ENCODE measurements at regions of chr10 and their contacts with region 1.

Region 1: DNA sequence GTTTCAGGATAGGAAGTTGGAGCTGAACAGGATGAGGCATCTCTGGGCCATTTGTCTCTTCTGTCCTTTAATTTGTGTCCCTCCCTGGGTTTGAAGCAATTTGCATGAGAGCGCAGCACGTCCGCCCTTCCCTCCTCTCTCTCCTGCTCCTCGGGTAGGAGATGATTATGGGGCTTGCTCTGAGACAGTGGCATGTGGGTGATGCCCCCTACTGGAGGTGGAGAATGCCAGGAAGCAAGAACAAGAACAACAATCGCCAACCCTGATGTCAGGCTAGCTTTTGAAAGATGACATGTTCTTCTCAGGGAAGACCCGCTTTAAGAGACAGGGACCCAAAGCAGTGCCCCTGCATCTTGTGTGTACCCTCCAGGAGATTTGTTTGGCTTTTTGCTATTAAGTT is 63.9 kb upstream of the LOXL4 start:
- DNase-seq: peak; percentile 46 to 59
- H3K4me3 ChIP-seq: no peak overlapping the region
- H3K27ac ChIP-seq: no peak overlapping the region
- H3K4me1 ChIP-seq: no peaks in the 10 kb centered on the region
- H3K27me3 ChIP-seq: no peaks in the 10 kb centered on the region
- CTCF ChIP-seq: peak; percentile 73 to 88 (median 80)
- EP300 ChIP-seq: no peak
- POLR2A ChIP-seq: no peak
- RAD21 ChIP-seq: peak; percentile 72 to 79

Region 2: GRCh38 chr10:98170249-98171117 is 161.4 kb before region 1 on chr10:
- CTCF ChIA-PET with region 1: interaction called, 17 read pairs
- POLR2A ChIA-PET with region 1: no interaction called
- DNase-seq: peak; percentile 46 to 66
- H3K4me3 ChIP-seq: no peak overlapping the region
- H3K27ac ChIP-seq: no peak overlapping the region
- H3K4me1 ChIP-seq: peaks cover 6 to 14% (median 12%) of the 10 kb centered on the region in 4 experiments
- H3K27me3 ChIP-seq: no peaks in the 10 kb centered on the region
- CTCF ChIP-seq: peak in 2 of 3 experiments; percentile 61 to 82; a peak in 3 of 4 replicates
- EP300 ChIP-seq: no peak
- POLR2A ChIP-seq: no peak
- RAD21 ChIP-seq: peak; percentile 66 to 75

Region 3: GRCh38 chr10:98262571-98262970 is 69.3 kb before region 1 on chr10:
- CTCF ChIA-PET with region 1: interaction called, 26 read pairs
- POLR2A ChIA-PET with region 1: no interaction called
- DNase-seq: peak in 1 of 2 experiments; percentile 34
- H3K4me3 ChIP-seq: no peak overlapping the region
- H3K27ac ChIP-seq: no peak overlapping the region
- H3K4me1 ChIP-seq: peaks cover 0 to 2% (median 0%) of the 10 kb centered on the region in 4 experiments; a peak in 1 of 7 replicates
- H3K27me3 ChIP-seq: peaks cover 0 to 4% (median 2%) of the 10 kb centered on the region in 4 experiments; a peak in 3 of 7 replicates
- CTCF ChIP-seq: peak; percentile 77 to 81 (median 80)
- EP300 ChIP-seq: no peak
- POLR2A ChIP-seq: no peak
- RAD21 ChIP-seq: peak; percentile 86 to 89

Region 4: GRCh38 chr10:98269072-98269912 is 62.6 kb before region 1 on chr10:
- CTCF ChIA-PET with region 1: interaction called, 26 read pairs
- POLR2A ChIA-PET with region 1: no interaction called
- DNase-seq: peak in 1 of 2 experiments; percentile 17
- H3K4me3 ChIP-seq: no peak overlapping the region; a peak in 1 of 8 replicates
- H3K27ac ChIP-seq: no peak overlapping the region
- H3K4me1 ChIP-seq: peaks cover 0 to 16% (median 9%) of the 10 kb centered on the region in 4 experiments; a peak in 6 of 7 replicates
- H3K27me3 ChIP-seq: peaks cover 0 to 12% (median 5%) of the 10 kb centered on the region in 4 experiments; a peak in 4 of 7 replicates
- CTCF ChIP-seq: no peak
- EP300 ChIP-seq: no peak
- POLR2A ChIP-seq: no peak
- RAD21 ChIP-seq: no peak

Region 5: DNA sequence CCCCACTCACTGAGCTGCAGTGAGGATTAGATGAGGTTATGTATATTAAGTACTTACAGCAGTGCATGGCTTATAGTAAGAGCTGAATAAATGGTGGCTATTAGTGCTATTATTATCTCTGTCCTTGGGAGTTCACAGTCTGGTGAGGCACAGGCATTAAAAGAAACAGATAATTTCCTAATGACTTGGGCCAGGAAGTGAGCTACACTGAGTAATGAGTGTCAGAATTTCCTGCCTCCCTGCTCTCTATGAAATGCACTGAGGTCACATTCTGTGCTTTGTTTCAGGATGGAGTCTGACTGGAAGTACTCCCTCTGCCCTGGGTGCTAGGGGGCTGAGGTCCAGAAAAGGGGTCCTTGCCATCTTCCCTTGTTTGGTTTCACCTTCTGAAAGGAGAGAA is 15.2 kb before region 1 on chr10:
- CTCF ChIA-PET with region 1: interaction called, 34 read pairs
- POLR2A ChIA-PET with region 1: no interaction called
- DNase-seq: no peak
- H3K4me3 ChIP-seq: no peak overlapping the region
- H3K27ac ChIP-seq: no peak overlapping the region
- H3K4me1 ChIP-seq: peaks cover 0 to 3% (median 0%) of the 10 kb centered on the region in 4 experiments; a peak in 3 of 7 replicates
- H3K27me3 ChIP-seq: no peaks in the 10 kb centered on the region
- CTCF ChIP-seq: no peak
- EP300 ChIP-seq: no peak
- POLR2A ChIP-seq: no peak
- RAD21 ChIP-seq: no peak

Region 6: GRCh38 chr10:98349508-98349922 is 17.6 kb after region 1 on chr10:
- CTCF ChIA-PET with region 1: interaction called, 10 read pairs
- POLR2A ChIA-PET with region 1: no interaction called
- DNase-seq: no peak
- H3K4me3 ChIP-seq: no peak overlapping the region
- H3K27ac ChIP-seq: no peak overlapping the region
- H3K4me1 ChIP-seq: no peaks in the 10 kb centered on the region
- H3K27me3 ChIP-seq: 0 out of 7 replicates have a peak, but pooled peaks cover 0 to 3% (median 0%) of the 10 kb centered on the region in 4 experiments
- CTCF ChIP-seq: no peak
- EP300 ChIP-seq: no peak
- POLR2A ChIP-seq: no peak
- RAD21 ChIP-seq: no peak